B cell (primary cell): ENCODE measurements at regions of chr12 and their contacts with region 1.

Region 1: GRCh38 chr12:54404061-54405004 is 14.7 kb downstream of the ITGA5 start:
- DNase-seq: peak; percentile 74
- ATAC-seq: peak; percentile 73
- H3K4me3 ChIP-seq: no peak overlapping the region
- H3K4me3 Mint-ChIP-seq: no peak overlapping the region
- H3K27ac ChIP-seq: no peak overlapping the region
- H3K27ac Mint-ChIP-seq: no peak overlapping the region
- H3K4me1 ChIP-seq: peaks cover 4 to 12% of the 10 kb centered on the region in 2 donors
- H3K4me1 Mint-ChIP-seq: peaks cover 9% of the 10 kb centered on the region
- H3K27me3 ChIP-seq: no peaks in the 10 kb centered on the region
- H3K27me3 Mint-ChIP-seq: peaks cover 7% of the 10 kb centered on the region
- CTCF ChIP-seq: peak; percentile 100

Region 2: DNA sequence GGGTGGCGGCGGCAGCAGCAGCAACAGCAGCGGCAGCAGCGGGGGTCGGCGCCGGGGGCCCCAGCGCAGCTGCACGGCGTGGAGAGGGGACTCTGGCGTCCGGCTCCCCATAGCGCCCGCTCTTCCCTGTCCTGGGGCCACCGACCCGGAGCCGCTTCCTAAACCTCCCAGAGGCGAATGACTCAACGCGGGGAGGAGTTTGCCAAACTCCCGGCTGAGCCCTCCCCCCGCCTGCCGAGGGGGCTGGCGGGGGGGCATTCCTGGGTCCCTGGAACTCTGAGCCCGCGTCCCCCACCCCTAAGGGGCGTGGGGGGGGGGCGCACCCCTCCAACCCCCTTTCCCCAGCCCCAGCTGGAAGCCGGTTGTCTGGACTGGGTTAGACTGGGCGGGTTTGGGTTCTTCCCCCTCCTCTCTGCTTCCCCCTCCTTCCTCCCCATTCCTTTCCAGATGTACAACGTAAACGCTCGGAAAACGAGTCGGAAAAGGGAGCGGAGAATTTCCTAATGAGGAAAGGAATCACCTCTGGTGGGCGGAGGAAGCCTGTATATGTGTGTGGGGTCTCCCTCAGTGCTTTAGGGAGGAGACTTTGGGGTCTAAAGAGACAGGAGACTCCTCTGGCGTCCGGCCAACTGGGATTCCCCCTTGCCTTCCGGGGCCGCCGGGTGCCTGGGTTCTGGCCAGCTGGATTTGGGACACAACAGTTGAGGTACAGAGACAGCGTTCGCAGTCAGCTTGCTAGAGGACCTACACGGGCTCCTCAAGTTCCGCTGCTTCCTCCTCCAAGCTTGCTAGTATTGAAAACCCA is 15.0 kb after region 1 on chr12 and contains the start of gene ITGA5:
- CTCF ChIA-PET with region 1: interaction called, 1,030 read pairs
- POLR2A ChIA-PET with region 1: no interaction called
- intact Hi-C with region 1: loop called (anchors 2 kb)
- DNase-seq: peak; percentile 48
- ATAC-seq: peak; percentile 43
- H3K4me3 ChIP-seq: peak within 1 kb of the TSS; percentile 48 to 62 (median 57)
- H3K4me3 Mint-ChIP-seq: peak within 1 kb of the TSS; percentile 84
- H3K27ac ChIP-seq: peak within 1 kb of the TSS in 1 of 2 donors; percentile 62
- H3K27ac Mint-ChIP-seq: peak within 1 kb of the TSS; percentile 77
- H3K4me1 ChIP-seq: peaks cover 51 to 58% of the 10 kb centered on the region in 2 donors
- H3K4me1 Mint-ChIP-seq: peaks cover 49% of the 10 kb centered on the region
- H3K27me3 ChIP-seq: peaks cover 0 to 19% (median 8%) of the 10 kb centered on the region in 4 experiments
- H3K27me3 Mint-ChIP-seq: peaks cover 21% of the 10 kb centered on the region
- CTCF ChIP-seq: no peak
- total RNA-seq, gene ITGA5: 6.1 and 6.7 TPM in 2 replicates